Mucosa of descending colon (tissue), 3 donors: ENCODE measurements at regions of chr2 and their contacts with region 1.

Region 1: DNA sequence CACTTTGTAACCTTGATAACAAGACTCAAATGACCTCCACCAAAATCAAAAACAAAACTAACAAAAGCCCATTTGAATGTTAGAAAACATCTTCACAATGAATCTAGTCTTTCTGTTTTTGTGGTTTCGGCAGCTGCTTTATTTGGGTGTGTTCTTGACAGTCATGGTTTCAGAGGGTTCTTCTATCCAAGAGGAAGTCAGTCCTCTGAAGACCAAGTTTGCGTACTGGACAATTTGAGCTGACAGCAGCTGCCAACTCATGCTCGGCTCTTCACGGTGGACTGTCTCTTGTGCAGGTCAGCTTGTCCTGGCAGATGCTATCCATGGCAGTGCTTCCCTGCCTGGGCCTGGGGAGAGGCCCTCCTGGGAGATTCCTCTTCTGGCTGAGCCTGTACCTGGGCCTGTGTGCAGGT is 91.0 kb downstream of the TMEM17 start:
- DNase-seq: no peak
- ATAC-seq: peak; percentile 53
- H3K4me3 ChIP-seq: no peak overlapping the region
- H3K4me1 ChIP-seq: peaks cover 6% of the 10 kb centered on the region
- CTCF ChIP-seq: no peak

Region 2: GRCh38 chr2:61910603-61911002 is 504.4 kb before region 1 on chr2:
- intact Hi-C with region 1: loop called in 1 of 2 experiments (anchors 5 kb)
- DNase-seq: no peak
- ATAC-seq: no peak
- H3K4me3 ChIP-seq: no peak overlapping the region
- H3K4me1 ChIP-seq: peaks cover 10% of the 10 kb centered on the region
- CTCF ChIP-seq: no peak

Region 3: GRCh38 chr2:61922714-61923113 is 492.3 kb before region 1 on chr2:
- intact Hi-C with region 1: loop called (anchors 2 to 5 kb)
- DNase-seq: no peak
- ATAC-seq: no peak
- H3K4me3 ChIP-seq: no peak overlapping the region
- H3K4me1 ChIP-seq: no peaks in the 10 kb centered on the region
- CTCF ChIP-seq: no peak

Region 4: GRCh38 chr2:61993444-61994024 is 421.5 kb before region 1 on chr2:
- intact Hi-C with region 1: loop called (anchors 5 to 10 kb)
- DNase-seq: peak in 1 of 3 donors; percentile 67
- ATAC-seq: peak; percentile 68
- H3K4me3 ChIP-seq: no peak overlapping the region
- H3K4me1 ChIP-seq: no peaks in the 10 kb centered on the region
- CTCF ChIP-seq: peak; percentile 19